Activated T-helper 2 cell treated with anti-CD3 and anti-CD28 coated beads, Interferon-gamma antibody, Interleukin-2, Interleukin-4, amounts not matched to agents 10 μg/mL and 5 μg/mL and 100 μg/mL, durations not matched to agents 14 hours and 24 hours and 36 hours (primary cell): ENCODE measurements at regions of chr12 and their contacts with region 1.

Region 1: DNA sequence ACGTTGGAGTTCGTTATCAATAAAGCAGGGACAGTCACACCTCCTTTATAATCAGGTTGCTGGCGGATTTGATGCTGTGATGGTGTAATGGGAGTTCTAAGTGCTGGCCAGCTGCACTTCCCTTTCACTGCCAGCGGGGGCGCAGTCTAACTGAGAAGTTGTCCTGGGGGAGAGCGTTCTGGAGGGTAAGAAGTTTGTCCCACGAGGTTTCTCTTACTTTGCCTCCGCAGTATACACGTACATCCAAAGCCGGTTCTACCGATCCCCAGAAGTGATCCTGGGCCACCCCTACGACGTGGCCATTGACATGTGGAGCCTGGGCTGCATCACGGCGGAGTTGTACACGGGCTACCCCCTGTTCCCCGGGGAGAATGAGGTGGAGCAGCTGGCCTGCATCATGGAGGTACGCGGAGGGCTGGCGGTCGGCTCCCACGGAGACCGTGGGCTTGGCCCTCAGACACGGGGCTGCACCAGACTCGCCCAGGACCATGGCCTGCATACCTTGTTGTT is 42.7 kb downstream of the DYRK4 start:
- DNase-seq: peak; percentile 70
- H3K4me3 Mint-ChIP-seq: peak overlapping the region; percentile 93
- H3K27ac Mint-ChIP-seq: peak overlapping the region; percentile 85
- H3K4me1 Mint-ChIP-seq: peaks cover 12% of the 10 kb centered on the region
- H3K27me3 Mint-ChIP-seq: peaks cover 20% of the 10 kb centered on the region

Region 2: DNA sequence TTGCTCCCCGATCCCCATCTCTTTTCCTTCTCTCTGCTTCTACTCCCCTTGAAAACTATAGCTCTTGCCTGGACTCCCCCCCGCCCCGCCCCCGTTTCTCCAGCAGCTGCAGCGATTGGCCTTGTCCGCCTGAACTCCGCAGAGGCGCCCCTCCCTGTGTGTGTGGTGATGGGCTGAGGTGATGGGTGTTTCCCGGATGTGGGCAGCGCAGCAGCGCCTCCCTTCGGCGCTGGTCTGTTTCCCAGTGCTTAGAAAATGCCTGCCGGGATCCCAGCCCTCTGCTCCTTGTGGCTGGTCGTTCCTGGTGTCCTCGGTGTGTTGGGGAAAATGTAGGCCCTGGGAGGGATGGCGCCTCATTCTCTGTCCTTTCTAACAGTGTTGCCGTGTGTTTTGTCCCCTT is 158.8 kb after region 1 on chr12:
- intact Hi-C with region 1: loop called (anchors 10 kb)
- DNase-seq: no peak
- H3K4me3 Mint-ChIP-seq: no peak overlapping the region
- H3K27ac Mint-ChIP-seq: no peak overlapping the region
- H3K4me1 Mint-ChIP-seq: peaks cover 4% of the 10 kb centered on the region
- H3K27me3 Mint-ChIP-seq: peaks cover 5% of the 10 kb centered on the region